ENCODE measurements at regions of chr14 and their contacts with region 1.

Region 1: DNA sequence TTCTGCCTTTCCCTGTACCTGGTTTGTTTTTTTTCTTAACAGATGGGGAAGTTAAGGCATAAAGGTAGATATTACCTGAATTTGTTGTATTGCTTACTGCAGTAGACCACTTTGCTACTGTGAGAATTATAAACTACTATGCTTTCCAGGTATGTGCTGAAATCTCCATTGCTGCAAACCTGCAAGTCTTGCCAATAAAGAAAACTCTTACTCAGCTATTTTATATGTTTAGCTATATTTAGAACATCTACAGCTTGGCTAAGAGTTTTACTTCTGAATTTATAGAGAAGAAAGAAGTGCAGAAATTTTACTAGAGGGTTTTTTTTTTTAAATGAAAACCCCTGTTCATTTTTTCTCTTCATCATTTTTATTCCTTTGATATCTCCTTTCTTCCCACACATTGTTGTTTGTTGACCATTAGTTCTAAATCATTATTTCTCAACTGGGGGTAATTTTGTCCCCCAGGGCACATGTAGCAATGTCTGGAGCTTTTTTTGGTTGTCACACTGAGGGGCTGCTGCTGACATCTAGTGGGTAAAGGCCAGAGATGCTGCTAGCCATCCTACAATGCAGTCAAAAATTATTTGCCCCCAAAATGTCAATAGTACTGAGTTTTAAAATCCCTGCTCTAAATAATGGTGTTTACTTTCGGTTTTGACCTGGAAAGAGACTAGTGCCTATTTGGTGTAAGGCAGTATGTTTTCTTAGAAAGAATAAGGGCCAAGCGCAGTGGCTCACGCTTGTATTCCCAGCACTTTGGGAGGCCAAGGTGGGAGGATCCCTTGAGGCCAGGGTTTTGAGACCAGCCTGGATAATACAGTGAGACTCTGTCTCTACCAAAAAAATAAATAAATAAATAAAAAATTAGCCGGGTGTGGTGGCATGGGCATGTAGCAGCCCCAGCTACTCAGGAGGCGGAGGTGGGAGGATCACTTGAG is 48.6 kb downstream of the PCNX1 start:
- DNase-seq: peak; percentile 26
- ATAC-seq: peak; percentile 79; the same call in 1 of the 2 replicates
- H3K4me3 ChIP-seq: no peak overlapping the region
- H3K27ac ChIP-seq: no peak overlapping the region
- H3K4me1 ChIP-seq: no peaks in the 10 kb centered on the region
- H3K27me3 ChIP-seq: no peaks in the 10 kb centered on the region
- CTCF ChIP-seq: peak; percentile 69
- POLR2A ChIP-seq: no peak
- RAD21 ChIP-seq: peak; percentile 84

Region 2: DNA sequence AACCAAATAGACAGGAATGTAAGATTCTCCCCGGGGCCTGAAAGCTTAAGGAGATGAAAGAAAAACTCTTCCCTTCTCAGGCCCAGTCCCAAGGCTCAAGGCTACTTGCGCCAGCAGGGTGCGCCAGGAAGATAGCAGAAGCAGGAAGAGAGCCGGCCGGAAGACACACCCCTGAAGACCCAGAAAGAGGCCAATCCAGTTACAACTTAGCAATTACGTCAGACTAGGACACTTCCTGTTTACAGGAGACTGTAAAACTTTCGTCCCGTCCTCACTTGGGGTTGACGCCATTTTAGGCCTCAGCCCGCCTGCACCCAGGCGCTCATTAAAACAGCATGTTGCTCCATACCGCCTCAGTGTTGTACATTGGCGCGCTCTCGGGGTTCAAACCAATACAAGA is 605.7 kb before region 1 on chr14:
- CTCF ChIA-PET with region 1: no interaction called
- POLR2A ChIA-PET with region 1: no interaction called
- dilution Hi-C with region 1: no loop called
- in situ Hi-C with region 1: no loop called
- intact Hi-C with region 1: loop called (anchors 5 kb)
- DNase-seq: no peak
- ATAC-seq: no peak
- H3K4me3 ChIP-seq: no peak overlapping the region
- H3K27ac ChIP-seq: no peak overlapping the region
- H3K4me1 ChIP-seq: no peaks in the 10 kb centered on the region
- H3K27me3 ChIP-seq: no peaks in the 10 kb centered on the region
- CTCF ChIP-seq: no peak
- POLR2A ChIP-seq: no peak
- RAD21 ChIP-seq: no peak

Region 3: DNA sequence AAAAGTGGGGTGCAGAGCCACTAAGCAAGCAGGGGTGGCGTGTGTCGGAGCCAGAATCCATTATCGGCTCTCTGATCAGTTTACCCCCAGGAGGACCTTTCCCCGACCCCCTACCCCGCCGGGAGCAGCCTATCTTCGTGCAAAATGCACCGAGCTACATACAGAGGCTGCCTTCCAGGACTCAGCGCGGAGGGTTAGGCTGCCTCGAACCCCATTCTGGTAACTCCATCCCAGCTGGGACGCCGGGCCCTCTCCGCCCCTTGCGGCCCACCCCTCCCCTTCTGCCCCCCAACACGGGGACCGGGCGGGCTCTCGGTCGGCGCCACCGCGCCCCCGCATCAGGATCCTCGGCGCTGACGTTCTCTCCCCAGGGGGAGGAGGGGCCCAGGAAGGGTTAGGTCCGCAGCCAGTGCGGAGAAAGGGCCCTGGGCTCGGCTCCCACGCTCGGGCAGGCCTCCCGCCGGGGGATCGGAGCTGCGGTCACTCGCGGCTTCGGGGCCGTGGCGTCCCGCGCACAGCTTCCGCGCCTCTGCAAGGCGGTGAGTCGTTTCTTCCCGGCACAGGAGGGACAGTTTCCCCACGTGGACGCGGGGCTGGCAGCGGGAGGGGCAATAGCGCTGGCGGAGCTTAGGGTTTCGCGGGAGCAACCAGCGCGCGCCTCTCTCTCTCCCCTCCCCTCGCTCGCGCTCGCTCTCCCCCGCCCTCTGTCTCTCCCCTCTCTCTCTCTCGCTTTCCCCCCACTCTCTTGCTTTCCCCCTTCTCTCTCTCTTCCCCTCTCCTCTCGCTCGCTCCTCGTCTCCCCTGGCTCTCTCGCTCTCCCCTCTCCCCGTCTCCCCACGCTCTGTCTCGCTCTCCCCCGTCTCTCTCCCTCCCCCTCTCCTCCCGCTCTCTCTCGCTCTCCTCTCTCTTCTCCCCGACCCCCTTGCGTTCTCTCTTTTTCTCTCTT is 134.0 kb before region 1 on chr14:
- CTCF ChIA-PET with region 1: interaction called, 12 read pairs
- POLR2A ChIA-PET with region 1: no interaction called
- dilution Hi-C with region 1: no loop called
- in situ Hi-C with region 1: no loop called
- intact Hi-C with region 1: loop called (anchors 1 kb)
- DNase-seq: peak; percentile 35
- ATAC-seq: peak; percentile 59
- H3K4me3 ChIP-seq: peak overlapping the region; percentile 92
- H3K27ac ChIP-seq: peak overlapping the region; percentile 22; the same call in 1 of the 2 replicates
- H3K4me1 ChIP-seq: no peaks in the 10 kb centered on the region
- H3K27me3 ChIP-seq: peaks cover 4% of the 10 kb centered on the region; the same call in 1 of the 2 replicates
- CTCF ChIP-seq: no peak
- POLR2A ChIP-seq: peak; percentile 51; the same call in 1 of the 2 replicates
- RAD21 ChIP-seq: no peak

Region 4: GRCh38 chr14:70827396-70828151 is 128.2 kb before region 1 on chr14:
- CTCF ChIA-PET with region 1: interaction called, 12 read pairs
- POLR2A ChIA-PET with region 1: no interaction called
- dilution Hi-C with region 1: no loop called
- in situ Hi-C with region 1: no loop called
- intact Hi-C with region 1: no loop called
- DNase-seq: no peak
- ATAC-seq: no peak
- H3K4me3 ChIP-seq: no peak overlapping the region
- H3K27ac ChIP-seq: no peak overlapping the region
- H3K4me1 ChIP-seq: no peaks in the 10 kb centered on the region
- H3K27me3 ChIP-seq: peaks cover 1% of the 10 kb centered on the region; the same call in 1 of the 2 replicates
- CTCF ChIP-seq: peak; percentile 10; the same call in 1 of the 2 replicates
- POLR2A ChIP-seq: no peak
- RAD21 ChIP-seq: 0 out of 2 replicates have a peak, but pooled peaks have one; percentile 8

Region 5: DNA sequence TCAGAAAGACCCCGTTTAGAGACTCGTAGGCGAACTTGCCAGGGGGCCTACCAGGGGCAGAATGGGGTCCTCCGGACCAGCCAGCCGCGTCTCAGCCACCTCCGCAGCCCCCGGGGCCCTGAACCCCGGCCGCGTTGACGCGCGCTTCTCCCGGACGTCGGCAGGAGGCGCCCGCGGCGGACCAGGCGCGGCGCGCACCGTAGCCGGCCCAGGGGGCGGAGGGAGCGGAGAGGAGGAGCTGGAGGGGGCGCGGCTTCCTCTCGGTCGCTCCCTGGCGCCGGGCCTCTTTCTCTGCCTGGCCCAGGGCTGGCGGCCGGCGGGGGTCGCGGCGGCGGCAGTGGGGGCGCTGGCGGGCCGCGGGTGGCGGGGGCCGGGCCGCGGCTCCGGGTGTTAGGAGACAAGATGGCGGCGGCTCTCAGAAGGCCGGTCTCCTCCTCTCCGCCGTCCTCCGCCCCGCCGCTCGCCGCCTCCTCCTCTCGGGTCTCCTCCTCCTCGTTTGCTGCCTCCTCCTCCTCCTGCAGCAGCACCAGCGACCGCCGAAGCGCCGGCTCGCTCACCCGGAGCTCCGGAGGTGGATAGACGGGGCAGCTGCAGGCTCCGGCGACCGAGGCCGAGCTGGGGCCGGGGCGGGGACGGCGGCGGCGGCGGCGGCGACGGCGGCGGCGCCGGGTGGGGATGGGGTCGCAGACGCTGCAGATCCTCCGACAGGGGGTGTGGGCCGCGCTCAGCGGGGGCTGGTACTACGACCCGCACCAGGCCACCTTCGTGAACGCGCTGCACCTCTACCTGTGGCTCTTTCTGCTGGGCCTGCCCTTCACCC is 48.4 kb before region 1 on chr14 and contains the start of gene PCNX1:
- CTCF ChIA-PET with region 1: interaction called, 9 read pairs
- POLR2A ChIA-PET with region 1: no interaction called
- dilution Hi-C with region 1: no loop called
- in situ Hi-C with region 1: no loop called
- intact Hi-C with region 1: loop called (anchors 1 kb)
- DNase-seq: peak; percentile 79
- ATAC-seq: peak; percentile 89
- H3K4me3 ChIP-seq: peak within 1 kb of the TSS; percentile 97
- H3K27ac ChIP-seq: peak within 1 kb of the TSS; percentile 87
- H3K4me1 ChIP-seq: peaks cover 17% of the 10 kb centered on the region
- H3K27me3 ChIP-seq: no peaks in the 10 kb centered on the region
- CTCF ChIP-seq: peak; percentile 80
- POLR2A ChIP-seq: peak; percentile 75
- RAD21 ChIP-seq: peak; percentile 62
- total RNA-seq, gene PCNX1: 43.7 and 45.3 TPM in 2 replicates